Calu3 (cell line): ENCODE measurements at regions of chr16 and their contacts with region 1.

Region 1: GRCh38 chr16:72847187-72848027 is 200.5 kb downstream of the ZFHX3 start:
- DNase-seq: peak; percentile 60
- H3K4me3 Mint-ChIP-seq: no peak overlapping the region
- H3K27ac Mint-ChIP-seq: no peak overlapping the region
- H3K4me1 Mint-ChIP-seq: peaks cover 42% of the 10 kb centered on the region
- H3K27me3 Mint-ChIP-seq: no peaks in the 10 kb centered on the region
- CTCF ChIP-seq: peak; percentile 31

Region 2: GRCh38 chr16:73047518-73048291 is 200.3 kb after region 1 on chr16 and contains the start of gene ZFHX3:
- CTCF ChIA-PET with region 1: no interaction called
- intact Hi-C with region 1: loop called (anchors 5 kb)
- DNase-seq: peak; percentile 71
- H3K4me3 Mint-ChIP-seq: peak within 1 kb of the TSS; percentile 51
- H3K27ac Mint-ChIP-seq: peak within 1 kb of the TSS; percentile 53
- H3K4me1 Mint-ChIP-seq: peaks cover 46% of the 10 kb centered on the region
- H3K27me3 Mint-ChIP-seq: no peaks in the 10 kb centered on the region
- CTCF ChIP-seq: no peak
- total RNA-seq, gene ZFHX3: 13.6 and 17.8 TPM in 2 replicates